Activated CD4-positive, alpha-beta T cell treated with anti-CD3 and anti-CD28 coated beads, Interleukin-2, amount 10 ng/mL, durations not matched to agents 7 days and 5 days (primary cell): ENCODE measurements at regions of chr9 and their contacts with region 1.

Region 1: GRCh38 chr9:136847827-136848392 is 1.3 kb upstream of the PHPT1 start:
- DNase-seq: peak; percentile 81
- H3K4me3 Mint-ChIP-seq: peak overlapping the region; percentile 92
- H3K27ac Mint-ChIP-seq: peak overlapping the region; percentile 67
- H3K4me1 Mint-ChIP-seq: peaks cover 21% of the 10 kb centered on the region
- H3K27me3 Mint-ChIP-seq: peaks cover 17% of the 10 kb centered on the region

Region 2: DNA sequence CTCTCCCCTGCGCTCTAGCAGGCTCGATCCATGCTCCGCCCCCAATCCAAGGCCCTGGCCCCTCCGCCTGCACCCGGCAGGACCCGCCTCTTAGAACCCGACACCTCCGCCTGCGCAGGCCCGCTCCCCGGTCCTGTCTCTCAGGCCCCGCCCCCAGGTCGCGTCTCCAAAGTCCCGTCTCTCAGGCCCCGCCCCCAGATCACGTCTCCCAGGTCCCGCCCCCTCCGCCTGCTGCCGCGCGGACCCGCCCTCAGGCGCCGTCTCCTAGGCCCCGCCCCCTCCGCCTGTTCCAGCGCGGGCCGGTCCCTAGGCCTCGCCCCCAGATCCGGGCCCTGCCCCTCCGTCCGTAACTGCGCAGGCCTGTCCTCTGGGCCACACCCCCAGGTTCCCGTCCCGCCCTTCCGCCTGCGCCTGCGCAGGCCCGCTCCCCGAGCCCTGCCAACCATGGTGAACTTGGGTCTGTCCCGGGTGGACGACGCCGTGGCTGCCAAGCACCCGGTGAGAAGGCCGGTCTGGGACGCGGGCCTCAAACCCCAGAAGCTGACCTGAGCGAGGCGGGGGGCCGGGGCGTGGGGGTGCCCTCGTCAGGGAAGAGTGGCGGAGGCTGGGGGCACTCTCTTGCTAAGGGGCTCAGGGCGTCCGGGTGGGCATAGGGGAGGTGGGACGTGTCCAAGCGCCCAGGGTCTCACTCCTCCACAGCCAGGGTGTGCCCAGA is 56.8 kb before region 1 on chr9 and contains the start of gene TMEM141:
- CTCF ChIA-PET with region 1: interaction called, 13 read pairs
- POLR2A ChIA-PET with region 1: no interaction called
- DNase-seq: peak; percentile 99
- H3K4me3 Mint-ChIP-seq: peak within 1 kb of the TSS; percentile 79
- H3K27ac Mint-ChIP-seq: peak within 1 kb of the TSS; percentile 93
- H3K4me1 Mint-ChIP-seq: peaks cover 40% of the 10 kb centered on the region
- H3K27me3 Mint-ChIP-seq: peaks cover 10% of the 10 kb centered on the region
- total RNA-seq, gene TMEM141: 28.5 to 38.5 TPM

Region 3: GRCh38 chr9:136814725-136815421 is 33.0 kb before region 1 on chr9:
- CTCF ChIA-PET with region 1: interaction called, 10 read pairs
- POLR2A ChIA-PET with region 1: no interaction called
- DNase-seq: no peak
- H3K4me3 Mint-ChIP-seq: no peak overlapping the region
- H3K27ac Mint-ChIP-seq: no peak overlapping the region
- H3K4me1 Mint-ChIP-seq: peaks cover 45% of the 10 kb centered on the region
- H3K27me3 Mint-ChIP-seq: no peaks in the 10 kb centered on the region

Region 4: GRCh38 chr9:136858844-136859757 is 11.2 kb after region 1 on chr9:
- CTCF ChIA-PET with region 1: interaction called, 10 read pairs
- POLR2A ChIA-PET with region 1: no interaction called
- DNase-seq: no peak
- H3K4me3 Mint-ChIP-seq: no peak overlapping the region
- H3K27ac Mint-ChIP-seq: no peak overlapping the region
- H3K4me1 Mint-ChIP-seq: peaks cover 4% of the 10 kb centered on the region
- H3K27me3 Mint-ChIP-seq: no peaks in the 10 kb centered on the region

Region 5: DNA sequence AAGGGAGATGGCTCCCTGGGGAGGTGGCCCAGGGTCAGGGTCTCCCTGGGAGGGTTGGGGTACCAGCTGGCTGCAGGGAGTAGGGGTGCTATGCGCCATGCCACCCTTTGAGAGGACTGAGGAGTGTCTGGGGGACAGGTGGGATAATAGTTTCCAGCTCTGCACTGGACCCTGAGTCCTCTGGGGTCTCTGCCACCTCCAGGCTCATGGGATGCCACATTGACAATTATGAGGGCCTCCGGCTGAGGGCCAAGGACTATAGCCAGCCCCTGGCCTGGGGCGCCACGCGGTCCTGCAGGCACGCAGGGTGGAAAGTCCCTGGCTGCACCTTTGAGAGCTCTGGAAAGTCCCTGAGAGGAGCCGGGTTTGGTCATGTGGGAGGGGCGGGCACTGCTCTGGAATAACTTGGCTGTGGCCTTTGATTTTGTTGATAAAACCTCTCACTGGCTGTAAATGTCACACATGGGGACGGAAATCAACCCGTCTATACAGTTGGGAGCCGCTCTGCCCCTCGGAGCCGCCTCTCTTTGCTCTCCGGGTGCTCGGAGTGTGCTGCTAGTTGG is 54.4 kb after region 1 on chr9:
- CTCF ChIA-PET with region 1: interaction called, 12 read pairs
- POLR2A ChIA-PET with region 1: no interaction called
- DNase-seq: peak; percentile 74
- H3K4me3 Mint-ChIP-seq: peak overlapping the region; percentile 63
- H3K27ac Mint-ChIP-seq: peak overlapping the region; percentile 95
- H3K4me1 Mint-ChIP-seq: peaks cover 39% of the 10 kb centered on the region
- H3K27me3 Mint-ChIP-seq: no peaks in the 10 kb centered on the region